Aorta (tissue), 5 donors: ENCODE measurements at regions of chr2 and their contacts with region 1.

Region 1: GRCh38 chr2:67397143-67397986 is at the start of gene ETAA1:
- DNase-seq: peak; percentile 96 to 98
- ATAC-seq: peak; percentile 99
- H3K4me3 ChIP-seq: peak within 1 kb of the TSS; percentile 64 to 66
- H3K27ac ChIP-seq: peak within 1 kb of the TSS in 1 of 2 donors; percentile 80
- H3K4me1 ChIP-seq: peaks cover 0 to 3% of the 10 kb centered on the region in 2 donors
- H3K27me3 ChIP-seq: no peaks in the 10 kb centered on the region
- total RNA-seq, gene ETAA1: 11.7 to 14.9 TPM

Region 2: DNA sequence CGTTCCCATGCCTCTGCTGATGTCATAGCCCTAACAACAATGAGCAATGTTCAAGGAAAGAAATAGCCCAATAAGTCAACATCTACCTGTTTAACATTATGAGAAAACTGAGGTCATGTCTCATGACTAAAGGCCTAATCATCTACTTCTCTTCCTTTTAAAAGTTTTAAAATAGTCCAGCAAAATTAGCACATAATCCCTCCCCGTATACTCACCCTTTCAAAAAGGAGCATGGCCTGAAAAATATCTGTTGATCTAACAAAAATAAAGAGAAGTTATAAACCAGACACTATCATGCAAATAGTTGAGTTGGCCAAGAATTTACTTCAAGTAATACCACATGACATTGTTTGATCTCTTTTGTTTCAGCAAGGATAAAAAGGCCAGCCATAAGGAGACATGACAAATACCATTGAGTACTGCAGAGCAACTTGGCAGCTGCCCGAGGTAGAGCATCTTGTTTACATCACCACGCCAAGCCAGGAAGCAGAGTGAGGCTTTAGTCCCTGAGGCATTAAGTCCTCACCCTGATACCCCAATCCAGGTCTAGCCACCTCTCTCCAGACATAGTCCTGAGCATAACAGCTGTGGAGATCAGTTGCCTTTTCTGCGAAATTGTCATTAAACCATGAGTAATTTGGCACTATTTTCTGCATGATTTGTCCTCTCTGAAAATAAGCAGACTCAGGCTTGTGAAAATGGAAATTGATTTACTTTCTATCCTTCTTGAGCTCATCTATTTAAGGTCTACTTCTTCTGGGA is 137.6 kb before region 1 on chr2:
- intact Hi-C with region 1: loop called in 1 of 2 experiments (anchors 10 kb)
- DNase-seq: peak; percentile 56 to 66
- ATAC-seq: peak; percentile 60
- H3K4me3 ChIP-seq: peak overlapping the region in 1 of 2 donors; percentile 66
- H3K27ac ChIP-seq: peak overlapping the region; percentile 38 to 99
- H3K4me1 ChIP-seq: peaks cover 0 to 3% of the 10 kb centered on the region in 2 donors
- H3K27me3 ChIP-seq: no peaks in the 10 kb centered on the region

Region 3: GRCh38 chr2:67374481-67374880 is 22.9 kb before region 1 on chr2:
- intact Hi-C with region 1: loop called in 1 of 2 experiments (anchors 2 kb)
- DNase-seq: no peak
- ATAC-seq: no peak
- H3K4me3 ChIP-seq: peak overlapping the region; percentile 53 to 76
- H3K27ac ChIP-seq: no peak overlapping the region
- H3K4me1 ChIP-seq: peaks cover 0 to 3% of the 10 kb centered on the region in 2 donors
- H3K27me3 ChIP-seq: no peaks in the 10 kb centered on the region